ENCODE measurements at regions of chr10 and their contacts with region 1.

Region 1: DNA sequence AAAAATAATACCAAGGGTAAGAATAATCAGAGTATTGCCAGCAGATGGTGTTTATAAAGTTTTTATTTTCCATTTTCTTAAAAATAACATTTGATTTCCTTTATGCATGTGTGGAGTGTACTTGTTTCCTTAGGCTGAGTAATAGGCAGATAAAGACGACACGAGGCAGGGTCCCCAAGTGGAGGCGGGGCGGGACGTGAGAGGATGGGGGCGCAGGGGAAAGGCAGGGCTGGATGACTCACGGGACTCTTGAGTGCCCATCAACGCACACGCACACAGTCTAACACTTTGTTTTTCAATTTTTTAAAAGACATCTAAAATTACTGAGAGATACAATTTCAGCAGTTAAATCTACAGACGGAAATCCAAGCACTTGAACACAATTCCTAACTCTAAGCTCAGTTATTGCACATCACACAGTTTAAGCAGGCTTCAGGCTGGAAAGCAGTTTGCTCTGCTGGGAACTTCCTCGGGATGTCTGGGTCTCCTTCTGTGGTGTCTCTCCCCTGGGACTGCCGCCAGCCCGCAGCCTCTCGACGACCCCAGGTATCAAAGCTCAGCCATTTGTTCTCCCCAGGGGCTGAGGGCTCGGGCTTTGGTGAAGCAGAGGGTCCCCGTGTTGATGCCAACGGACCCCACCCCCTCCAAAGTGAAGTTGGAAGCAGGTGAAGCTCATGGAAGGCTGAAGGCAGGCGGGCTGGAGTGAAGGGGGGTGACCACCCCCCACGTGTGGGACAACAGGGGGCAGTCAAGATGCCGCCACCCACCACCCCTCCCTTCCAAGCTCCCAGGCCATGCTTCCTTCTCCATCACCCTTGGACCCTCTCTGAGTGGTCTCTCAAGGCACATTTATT is 29.1 kb downstream of the SPOCK2 start:
- DNase-seq: peak in 1 of 10 donors; percentile 49
- H3K4me3 ChIP-seq: no peak overlapping the region
- H3K27ac ChIP-seq: peak overlapping the region in 3 of 59 donors; percentile 12 to 44 (median 27)
- H3K27me3 ChIP-seq: no peaks in the 10 kb centered on the region
- CTCF ChIP-seq: no peak

Region 2: DNA sequence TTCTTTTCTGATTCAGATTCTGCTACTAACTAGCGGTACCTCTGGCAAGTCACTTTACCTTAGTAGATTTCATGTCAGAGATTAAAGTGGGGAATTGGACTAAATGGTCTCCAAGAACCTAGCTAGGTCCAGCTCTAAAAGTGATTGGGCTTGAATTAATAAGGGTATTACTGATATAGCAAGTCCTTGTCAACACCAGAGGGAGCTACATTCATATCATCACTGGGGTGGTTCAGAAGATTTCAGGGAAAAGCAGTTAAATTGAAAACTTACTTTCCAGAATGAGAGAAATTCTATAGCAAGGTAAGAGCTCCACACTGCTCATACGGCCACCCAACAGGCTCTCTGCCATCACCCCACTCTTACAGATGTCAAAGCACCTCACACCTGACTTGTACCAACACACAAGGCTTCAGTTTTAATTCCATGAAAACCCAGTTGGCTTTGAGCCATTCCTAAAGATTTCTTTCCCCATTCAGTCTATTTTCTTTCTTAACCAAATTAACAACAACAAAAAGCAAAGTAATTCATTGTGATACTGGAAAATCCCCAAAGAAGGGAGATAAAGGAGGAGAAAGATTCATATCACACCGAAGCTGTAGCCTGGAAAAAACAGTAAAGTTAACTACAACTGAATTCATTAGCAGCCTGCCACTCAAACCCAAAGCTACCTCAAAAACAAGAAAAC is 67.1 kb after region 1 on chr10:
- intact Hi-C with region 1: loop called in 1 of 2 experiments (anchors 10 kb)
- DNase-seq: no peak
- H3K4me3 ChIP-seq: no peak overlapping the region
- H3K27ac ChIP-seq: peak overlapping the region in 35 of 59 donors; percentile 0 to 71 (median 38)
- H3K27me3 ChIP-seq: no peaks in the 10 kb centered on the region
- CTCF ChIP-seq: peak; percentile 16 to 71 (median 50)

Measured in dorsolateral prefrontal cortex (tissue), 120 donors.